ENCODE measurements at regions of chr2 and their contacts with region 1.

Region 1: DNA sequence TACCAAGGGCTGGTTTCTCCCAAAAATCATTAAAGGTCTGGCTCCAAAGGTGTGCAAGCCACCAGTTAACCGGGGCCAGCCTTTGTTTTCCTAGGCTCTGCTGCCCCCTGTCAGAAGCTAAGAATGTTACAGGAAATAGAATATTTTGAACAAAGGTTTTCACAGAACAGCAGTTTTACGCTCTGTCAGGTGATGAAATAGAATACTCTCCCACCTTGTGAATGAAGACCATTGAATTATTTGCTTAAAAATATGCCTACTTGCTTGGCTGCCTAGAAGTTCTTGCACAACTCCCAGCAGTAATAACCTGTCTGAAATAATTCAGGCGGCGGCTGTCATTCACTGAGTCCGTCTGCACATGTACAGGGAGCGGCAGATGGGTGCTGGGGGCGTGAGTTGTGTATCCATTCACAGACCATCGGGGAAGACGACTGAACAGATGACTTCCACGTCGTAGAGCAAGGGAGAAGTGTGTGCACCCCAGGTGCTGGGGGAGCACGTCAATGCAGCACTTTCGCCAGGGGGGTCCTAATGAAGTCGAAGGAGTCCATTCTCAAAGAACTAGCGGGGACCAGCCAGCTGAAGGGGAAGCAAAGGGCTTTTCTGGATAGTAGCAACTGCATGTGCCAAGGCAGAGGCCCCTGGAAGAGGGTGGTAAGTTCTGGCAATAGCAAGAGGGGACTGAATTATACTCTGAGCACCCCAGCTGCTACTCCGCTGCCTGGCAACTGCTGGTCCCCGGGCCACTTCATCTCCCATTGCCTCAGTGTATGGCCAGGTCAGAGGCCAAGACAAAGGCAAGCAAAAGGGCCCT is 56.1 kb downstream of the SF3B1 start:
- DNase-seq: peak; percentile 74
- H3K4me3 Mint-ChIP-seq: peak overlapping the region; percentile 19
- H3K27ac Mint-ChIP-seq: no peak overlapping the region
- H3K4me1 Mint-ChIP-seq: peaks cover 16% of the 10 kb centered on the region
- H3K27me3 Mint-ChIP-seq: peaks cover 12% of the 10 kb centered on the region
- CTCF ChIP-seq: peak; percentile 70

Region 2: GRCh38 chr2:197310271-197310985 is 68.3 kb before region 1 on chr2 and contains the start of gene ANKRD44:
- CTCF ChIA-PET with region 1: interaction called, 4 read pairs
- POLR2A ChIA-PET with region 1: interaction called, 4 read pairs
- intact Hi-C with region 1: loop called (anchors 5 kb)
- DNase-seq: peak; percentile 79
- H3K4me3 Mint-ChIP-seq: peak within 1 kb of the TSS; percentile 78
- H3K27ac Mint-ChIP-seq: peak within 1 kb of the TSS; percentile 3
- H3K4me1 Mint-ChIP-seq: peaks cover 10% of the 10 kb centered on the region
- H3K27me3 Mint-ChIP-seq: no peaks in the 10 kb centered on the region
- CTCF ChIP-seq: peak; percentile 23
- total RNA-seq, gene ANKRD44: 4.4 and 6.9 TPM in 2 replicates

Region 3: DNA sequence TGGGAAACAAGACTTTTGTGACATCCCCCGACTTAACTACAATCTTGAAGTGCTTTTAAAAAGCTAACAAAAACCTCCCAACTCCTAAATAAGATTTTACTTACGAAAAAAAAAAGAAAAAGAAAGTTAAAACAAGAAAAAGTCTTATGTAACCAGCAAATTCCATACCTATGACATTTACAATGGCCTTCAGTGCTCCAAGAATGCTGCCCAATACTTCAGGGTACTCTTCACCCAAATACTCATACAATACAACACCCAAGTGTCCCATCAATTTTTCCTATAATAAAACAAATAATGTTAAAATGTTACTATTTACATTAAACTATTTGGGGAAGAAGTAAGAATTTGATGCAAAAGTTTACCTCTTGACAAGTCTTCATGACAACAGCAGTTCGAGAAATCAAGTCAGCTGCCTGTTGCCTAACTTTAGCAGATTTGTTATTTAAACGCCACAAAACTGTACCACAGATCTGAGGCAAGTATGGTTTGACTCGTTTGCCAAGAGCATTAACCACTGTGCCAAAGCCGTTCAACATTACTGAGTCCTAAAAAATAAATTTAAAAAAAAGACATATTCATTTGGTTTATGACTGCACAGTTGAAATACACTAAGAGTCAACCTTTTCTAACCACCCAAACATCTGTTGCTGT is 21.3 kb after region 1 on chr2:
- CTCF ChIA-PET with region 1: no interaction called
- POLR2A ChIA-PET with region 1: no interaction called
- intact Hi-C with region 1: no loop called
- DNase-seq: no peak
- H3K4me3 Mint-ChIP-seq: no peak overlapping the region
- H3K27ac Mint-ChIP-seq: no peak overlapping the region
- H3K4me1 Mint-ChIP-seq: no peaks in the 10 kb centered on the region
- H3K27me3 Mint-ChIP-seq: no peaks in the 10 kb centered on the region
- CTCF ChIP-seq: no peak

Region 4: GRCh38 chr2:197538412-197538811 is 159.7 kb after region 1 on chr2:
- CTCF ChIA-PET with region 1: no interaction called
- POLR2A ChIA-PET with region 1: no interaction called
- intact Hi-C with region 1: no loop called
- DNase-seq: no peak
- H3K4me3 Mint-ChIP-seq: no peak overlapping the region
- H3K27ac Mint-ChIP-seq: no peak overlapping the region
- H3K4me1 Mint-ChIP-seq: no peaks in the 10 kb centered on the region
- H3K27me3 Mint-ChIP-seq: no peaks in the 10 kb centered on the region
- CTCF ChIP-seq: no peak